ENCODE measurements at regions of chr22 and their contacts with region 1.

Region 1: GRCh38 chr22:29524440-29525191 is 28.9 kb downstream of the THOC5 start:
- DNase-seq: peak; percentile 61
- ATAC-seq: peak; percentile 91
- H3K4me3 ChIP-seq: no peak overlapping the region
- H3K4me3 Mint-ChIP-seq: no peak overlapping the region
- H3K27ac ChIP-seq: no peak overlapping the region
- H3K27ac Mint-ChIP-seq: no peak overlapping the region
- H3K4me1 ChIP-seq: no peaks in the 10 kb centered on the region
- H3K4me1 Mint-ChIP-seq: no peaks in the 10 kb centered on the region
- H3K27me3 ChIP-seq: no peaks in the 10 kb centered on the region
- H3K27me3 Mint-ChIP-seq: no peaks in the 10 kb centered on the region
- CTCF ChIP-seq: peak; percentile 63

Region 2: GRCh38 chr22:29503811-29504372 is 20.7 kb before region 1 on chr22:
- CTCF ChIA-PET with region 1: interaction called, 12 read pairs
- POLR2A ChIA-PET with region 1: no interaction called
- intact Hi-C with region 1: no loop called
- DNase-seq: no peak
- ATAC-seq: no peak
- H3K4me3 ChIP-seq: no peak overlapping the region
- H3K4me3 Mint-ChIP-seq: no peak overlapping the region
- H3K27ac ChIP-seq: no peak overlapping the region
- H3K27ac Mint-ChIP-seq: no peak overlapping the region
- H3K4me1 ChIP-seq: no peaks in the 10 kb centered on the region
- H3K4me1 Mint-ChIP-seq: no peaks in the 10 kb centered on the region
- H3K27me3 ChIP-seq: no peaks in the 10 kb centered on the region
- H3K27me3 Mint-ChIP-seq: no peaks in the 10 kb centered on the region
- CTCF ChIP-seq: no peak

Measured in B cell (primary cell).